H1 (cell line): ENCODE measurements at regions of chr3 and their contacts with region 1.

Region 1: GRCh38 chr3:11282250-11283138 is 10.3 kb downstream of the ATG7 start:
- DNase-seq: no peak
- H3K4me3 ChIP-seq: no peak overlapping the region
- H3K27ac ChIP-seq: no peak overlapping the region
- H3K4me1 ChIP-seq: no peaks in the 10 kb centered on the region
- H3K27me3 ChIP-seq: no peaks in the 10 kb centered on the region
- CTCF ChIP-seq: no peak
- EP300 ChIP-seq: no peak
- POLR2A ChIP-seq: no peak
- RAD21 ChIP-seq: no peak

Region 2: GRCh38 chr3:11271986-11272904 is 10.2 kb before region 1 on chr3 and contains the start of gene ATG7:
- CTCF ChIA-PET with region 1: interaction called, 3 read pairs
- POLR2A ChIA-PET with region 1: interaction called, 13 read pairs
- DNase-seq: peak; percentile 88 to 96
- H3K4me3 ChIP-seq: peak within 1 kb of the TSS; percentile 89 to 99 (median 98)
- H3K27ac ChIP-seq: peak within 1 kb of the TSS; percentile 95
- H3K4me1 ChIP-seq: peaks cover 0 to 9% (median 5%) of the 10 kb centered on the region in 4 experiments; a peak in 4 of 7 replicates
- H3K27me3 ChIP-seq: no peaks in the 10 kb centered on the region
- CTCF ChIP-seq: no peak
- EP300 ChIP-seq: 0 out of 3 replicates have a peak, but pooled peaks of 1 of the 2 experiments have one; percentile 5
- POLR2A ChIP-seq: peak; percentile 89 to 97
- RAD21 ChIP-seq: no peak
- total RNA-seq, gene ATG7: 15.1 and 19.1 TPM in 2 replicates